ENCODE measurements at regions of chr7 and their contacts with region 1.

Region 1: DNA sequence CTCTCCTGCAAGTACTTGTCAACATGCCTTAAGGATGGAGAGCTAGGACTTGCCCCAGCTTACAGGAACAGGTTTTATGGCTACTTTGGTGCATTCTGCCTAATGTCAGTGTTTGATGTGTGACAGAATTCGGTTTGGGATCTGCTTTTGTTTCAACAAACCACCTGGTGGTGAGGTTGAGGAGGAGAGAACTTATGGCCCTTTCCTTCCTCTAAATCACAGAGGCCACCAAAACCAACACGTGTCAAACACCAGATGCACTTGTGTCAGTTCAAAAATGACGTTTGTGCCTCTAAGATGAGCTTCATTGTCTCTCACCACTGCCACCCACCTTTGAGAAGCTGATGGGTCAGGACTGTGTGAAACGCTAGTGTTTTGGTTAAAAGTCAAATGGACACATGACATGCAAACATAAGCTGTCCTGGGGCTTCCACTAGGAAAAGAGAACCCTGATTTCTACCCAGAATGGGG is 83.9 kb downstream of the OSBPL3 start:
- DNase-seq: no peak
- ATAC-seq: peak; percentile 64
- H3K4me3 ChIP-seq: no peak overlapping the region
- H3K4me3 Mint-ChIP-seq: peak overlapping the region in 1 of 10 donors; percentile 8
- H3K27ac ChIP-seq: no peak overlapping the region
- H3K27ac Mint-ChIP-seq: peak overlapping the region in 2 of 9 donors; percentile 36 to 54
- H3K4me1 ChIP-seq: peaks cover 0 to 22% of the 10 kb centered on the region in 2 donors
- H3K4me1 Mint-ChIP-seq: peaks cover 16 to 72% (median 30%) of the 10 kb centered on the region in 7 donors
- H3K27me3 ChIP-seq: no peaks in the 10 kb centered on the region
- H3K27me3 Mint-ChIP-seq: no peaks in the 10 kb centered on the region

Region 2: GRCh38 chr7:24882989-24883621 is 13.0 kb before region 1 on chr7:
- CTCF ChIA-PET with region 1: no interaction called
- POLR2A ChIA-PET with region 1: no interaction called
- intact Hi-C with region 1: loop called in 1 of 2 experiments (anchors 2 kb)
- DNase-seq: no peak
- ATAC-seq: no peak
- H3K4me3 ChIP-seq: no peak overlapping the region
- H3K4me3 Mint-ChIP-seq: no peak overlapping the region
- H3K27ac ChIP-seq: no peak overlapping the region
- H3K27ac Mint-ChIP-seq: no peak overlapping the region
- H3K4me1 ChIP-seq: no peaks in the 10 kb centered on the region
- H3K4me1 Mint-ChIP-seq: peaks cover 0 to 48% (median 4%) of the 10 kb centered on the region in 7 donors
- H3K27me3 ChIP-seq: no peaks in the 10 kb centered on the region
- H3K27me3 Mint-ChIP-seq: no peaks in the 10 kb centered on the region

Measured in naive thymus-derived CD4-positive, alpha-beta T cell (primary cell).